Heart right ventricle (tissue), 16 donors: ENCODE measurements at regions of chr6 and their contacts with region 1.

Region 1: DNA sequence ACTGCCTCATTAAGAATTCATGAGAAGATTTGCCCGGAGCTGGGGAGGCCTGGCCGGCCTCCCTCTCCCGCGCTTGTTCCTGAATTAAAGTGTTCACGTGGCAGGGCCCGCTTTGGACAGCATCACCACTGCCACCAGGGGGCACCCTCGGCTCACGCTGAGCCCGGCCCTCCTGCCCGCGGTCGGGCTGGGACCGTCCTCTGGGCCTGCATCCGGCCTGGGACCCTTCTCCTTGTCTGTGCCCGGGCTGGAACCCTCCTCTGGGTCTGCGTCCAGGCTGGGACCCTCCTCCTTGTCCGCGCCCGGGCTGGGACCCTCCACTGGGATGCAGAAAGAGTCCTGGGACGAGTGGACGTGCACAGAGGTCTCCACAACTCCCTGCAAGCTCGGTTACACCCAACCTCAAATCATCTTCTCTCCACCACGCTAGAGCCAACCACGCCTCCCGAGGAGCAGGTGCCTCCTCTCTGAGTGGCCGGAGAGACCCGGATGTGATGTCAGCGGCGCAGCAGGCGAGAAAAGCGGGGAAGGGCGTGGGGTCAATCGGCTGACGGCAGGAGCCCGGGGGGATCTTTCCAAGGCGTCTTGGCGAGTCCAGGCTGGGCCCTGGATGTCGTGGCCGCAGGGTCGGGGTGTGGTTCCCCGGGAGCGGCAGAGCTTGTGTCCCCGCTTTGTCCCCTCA is 50.9 kb upstream of the DACT2 start:
- DNase-seq: peak; percentile 65 to 82
- ATAC-seq: peak; percentile 87 to 93 (median 88)
- H3K4me3 ChIP-seq: no peak overlapping the region
- H3K27ac ChIP-seq: no peak overlapping the region
- H3K4me1 ChIP-seq: peaks cover 0 to 10% (median 0%) of the 10 kb centered on the region in 9 donors
- H3K27me3 ChIP-seq: peaks cover 0 to 37% (median 5%) of the 10 kb centered on the region in 7 donors
- CTCF ChIP-seq: peak; percentile 64 to 89 (median 81)

Region 2: DNA sequence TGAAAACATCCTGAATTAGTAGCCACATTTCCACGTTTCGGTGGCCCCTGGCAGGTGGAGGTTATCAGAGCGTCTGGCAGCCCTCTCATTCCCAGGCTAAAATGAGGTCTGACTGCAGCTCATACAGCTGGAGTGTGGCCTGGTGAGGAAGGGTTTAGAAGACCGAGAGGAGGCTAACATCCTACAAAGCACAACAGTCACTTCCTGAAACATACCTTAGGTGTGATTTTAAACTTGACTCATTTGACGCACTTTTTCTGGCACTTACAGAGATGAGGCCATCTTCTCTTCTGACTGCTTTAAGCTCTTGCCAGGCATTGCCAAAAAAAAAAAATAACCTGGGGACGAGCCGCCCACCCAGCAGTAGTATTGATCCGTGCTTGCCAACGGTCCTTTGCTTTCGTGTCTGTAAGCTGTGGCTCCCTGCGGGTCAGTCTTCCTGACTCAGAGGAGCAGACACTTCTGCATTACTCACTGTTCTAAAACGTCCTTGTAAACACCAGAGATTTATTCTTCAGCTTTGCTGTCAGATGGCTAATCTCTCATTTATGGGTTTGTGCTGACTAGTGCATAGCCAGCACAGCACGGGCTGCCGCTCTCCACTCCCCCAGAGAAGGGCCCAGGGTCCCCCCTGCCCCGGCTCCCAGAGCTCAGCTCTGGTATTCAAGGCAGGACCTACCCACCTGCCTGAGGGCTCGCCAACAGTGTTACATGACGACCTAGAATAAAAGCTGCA is 213.0 kb before region 1 on chr6:
- intact Hi-C with region 1: loop called in 1 of 10 experiments (anchors 10 kb)
- DNase-seq: no peak
- ATAC-seq: peak in 4 of 8 donors; percentile 35 to 56 (median 42)
- H3K4me3 ChIP-seq: no peak overlapping the region
- H3K27ac ChIP-seq: no peak overlapping the region
- H3K4me1 ChIP-seq: no peaks in the 10 kb centered on the region
- H3K27me3 ChIP-seq: peaks cover 0 to 54% (median 29%) of the 10 kb centered on the region in 7 donors
- CTCF ChIP-seq: no peak

Region 3: GRCh38 chr6:168440520-168441433 is 70.3 kb after region 1 on chr6 and contains the start of gene SMOC2:
- intact Hi-C with region 1: loop called in 2 of 10 experiments (anchors 5 to 10 kb)
- DNase-seq: peak; percentile 54 to 58
- ATAC-seq: peak; percentile 61 to 85 (median 75)
- H3K4me3 ChIP-seq: peak within 1 kb of the TSS; percentile 33 to 68 (median 64)
- H3K27ac ChIP-seq: peak within 1 kb of the TSS in 9 of 10 donors; percentile 26 to 76 (median 69)
- H3K4me1 ChIP-seq: peaks cover 0 to 32% (median 8%) of the 10 kb centered on the region in 9 donors
- H3K27me3 ChIP-seq: peaks cover 12 to 79% (median 60%) of the 10 kb centered on the region in 7 donors
- CTCF ChIP-seq: peak in 1 of 9 donors; percentile 6
- total RNA-seq, gene SMOC2: 6.6 to 39.1 (median 18.4) TPM

Region 4: DNA sequence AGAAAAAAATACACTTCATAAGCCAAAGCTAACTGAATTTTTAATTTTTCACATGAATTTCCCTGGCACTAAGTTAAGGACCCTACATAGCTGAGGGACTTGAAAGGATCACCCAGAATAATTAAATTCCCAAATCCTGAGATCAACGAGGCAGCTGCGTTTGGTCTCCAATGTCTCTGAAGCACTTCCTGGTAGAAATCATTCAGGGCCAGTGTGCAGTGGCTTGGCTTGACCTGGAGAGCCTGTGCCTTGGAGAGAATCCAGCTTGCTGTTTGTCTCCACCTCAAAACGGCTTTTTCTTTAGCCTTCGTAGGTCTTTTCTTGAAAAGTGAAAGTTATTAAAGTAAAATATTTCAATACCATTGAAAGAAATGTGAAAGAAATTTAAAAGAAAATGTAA is 163.0 kb after region 1 on chr6:
- intact Hi-C with region 1: loop called in 2 of 10 experiments (anchors 5 to 10 kb)
- DNase-seq: peak in 1 of 2 donors; percentile 47
- ATAC-seq: peak in 7 of 8 donors; percentile 40 to 80 (median 66)
- H3K4me3 ChIP-seq: no peak overlapping the region
- H3K27ac ChIP-seq: peak overlapping the region in 9 of 10 donors; percentile 5 to 69 (median 44)
- H3K4me1 ChIP-seq: peaks cover 0 to 58% (median 11%) of the 10 kb centered on the region in 9 donors
- H3K27me3 ChIP-seq: no peaks in the 10 kb centered on the region
- CTCF ChIP-seq: no peak

Region 5: DNA sequence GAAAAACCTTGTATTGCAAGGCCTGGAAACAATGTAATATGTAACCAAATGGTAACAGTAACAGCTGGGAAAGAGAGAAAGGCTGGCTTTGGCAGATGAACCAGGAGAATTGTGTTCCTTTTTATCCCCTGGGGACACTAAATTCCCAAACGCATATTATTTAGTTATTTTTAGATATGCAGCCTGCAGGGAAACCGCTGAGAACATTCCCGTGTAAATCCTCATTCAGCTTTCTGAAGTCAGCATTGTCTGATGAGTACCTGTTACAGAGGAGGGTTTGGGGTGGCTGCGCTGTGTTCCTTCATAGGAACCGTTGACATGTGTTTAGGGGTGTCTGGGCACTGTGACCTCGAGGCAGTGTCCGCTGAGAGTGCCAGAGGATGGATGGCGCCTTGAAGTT is 171.8 kb after region 1 on chr6:
- intact Hi-C with region 1: loop called in 2 of 10 experiments (anchors 10 kb)
- DNase-seq: no peak
- ATAC-seq: peak in 7 of 8 donors; percentile 28 to 79 (median 38)
- H3K4me3 ChIP-seq: no peak overlapping the region
- H3K27ac ChIP-seq: peak overlapping the region in 7 of 10 donors; percentile 34 to 79 (median 51)
- H3K4me1 ChIP-seq: peaks cover 0 to 45% (median 24%) of the 10 kb centered on the region in 9 donors
- H3K27me3 ChIP-seq: peaks cover 0 to 5% (median 0%) of the 10 kb centered on the region in 7 donors
- CTCF ChIP-seq: no peak

Region 6: DNA sequence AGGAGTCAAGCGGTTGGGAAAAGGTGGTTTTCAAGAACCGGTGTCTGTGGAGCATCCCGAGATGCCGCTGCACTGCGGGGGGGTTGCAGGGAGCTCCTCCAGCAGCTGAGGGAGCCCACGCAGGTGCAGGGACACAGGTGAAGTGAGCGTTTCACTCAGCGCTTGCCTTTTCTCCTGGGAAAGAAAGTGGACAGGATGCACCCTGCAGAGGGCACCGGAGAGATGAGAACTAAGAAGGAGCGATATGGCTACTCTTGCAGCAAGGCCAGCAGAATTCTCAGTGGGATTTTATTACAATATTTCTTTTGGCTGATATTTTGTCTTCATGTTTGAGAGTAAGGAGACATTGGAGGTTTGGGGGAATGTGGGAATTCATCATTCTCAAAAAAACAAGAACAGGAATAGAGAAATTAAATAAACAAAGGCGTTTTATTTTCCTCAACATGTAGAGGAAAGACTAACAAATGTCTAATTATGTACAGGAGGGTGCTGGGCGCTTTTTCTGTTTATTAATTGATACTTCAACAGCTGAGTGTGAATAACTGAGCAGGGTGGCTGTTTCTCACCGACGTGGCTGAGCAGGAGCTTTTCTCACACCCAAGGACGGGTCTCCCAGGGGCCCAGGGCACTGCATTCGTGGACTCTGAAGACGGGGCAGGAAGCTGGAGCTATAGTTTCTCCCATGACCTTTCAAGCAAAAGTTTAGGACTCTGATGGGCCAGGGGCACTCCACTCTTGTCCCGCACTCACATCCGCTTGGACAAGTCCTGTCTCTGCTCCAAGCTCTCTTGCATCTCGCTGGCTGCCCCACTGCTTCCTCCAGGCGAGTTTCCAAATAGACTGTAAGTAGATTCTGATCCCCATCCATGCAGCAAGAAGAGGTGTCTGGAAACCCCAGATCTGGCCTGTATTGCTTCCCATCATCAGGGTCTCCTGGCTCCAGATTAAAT is 246.6 kb after region 1 on chr6:
- intact Hi-C with region 1: loop called in 1 of 10 experiments (anchors 5 kb)
- DNase-seq: peak in 1 of 2 donors; percentile 39
- ATAC-seq: peak; percentile 53 to 91 (median 74)
- H3K4me3 ChIP-seq: no peak overlapping the region
- H3K27ac ChIP-seq: peak overlapping the region in 6 of 10 donors; percentile 15 to 50 (median 40)
- H3K4me1 ChIP-seq: peaks cover 0 to 17% (median 0%) of the 10 kb centered on the region in 9 donors
- H3K27me3 ChIP-seq: no peaks in the 10 kb centered on the region
- CTCF ChIP-seq: peak in 8 of 9 donors; percentile 11 to 57 (median 38)

Region 7: DNA sequence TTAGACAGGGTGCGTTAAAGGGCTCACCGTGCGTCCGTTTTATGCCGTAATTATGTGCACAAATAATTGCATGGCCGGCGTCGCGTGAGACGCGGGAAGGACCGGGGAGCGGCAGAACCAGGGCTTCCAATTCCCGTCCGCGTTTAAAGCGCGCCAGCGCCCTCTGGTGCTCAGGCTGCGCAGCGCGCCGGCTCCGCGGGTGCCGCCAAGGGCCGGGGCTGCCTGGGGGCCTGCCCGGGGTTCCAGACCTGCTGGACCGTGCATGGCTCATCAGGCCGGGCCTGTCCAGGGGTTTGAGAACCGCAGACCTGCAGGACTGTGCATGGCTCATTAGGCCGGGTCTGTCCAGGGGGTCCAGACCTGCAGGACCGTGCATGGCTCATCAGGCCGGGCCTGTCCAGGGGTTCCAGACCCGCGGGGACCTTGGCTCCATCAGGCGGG is 514.2 kb after region 1 on chr6:
- intact Hi-C with region 1: loop called (anchors 1 to 2 kb)
- DNase-seq: peak; percentile 54 to 80
- ATAC-seq: peak; percentile 82 to 88 (median 86)
- H3K4me3 ChIP-seq: peak overlapping the region in 8 of 10 donors; percentile 4 to 49 (median 42)
- H3K27ac ChIP-seq: peak overlapping the region in 1 of 10 donors; percentile 41
- H3K4me1 ChIP-seq: peaks cover 0 to 5% (median 0%) of the 10 kb centered on the region in 9 donors
- H3K27me3 ChIP-seq: peaks cover 0 to 26% (median 8%) of the 10 kb centered on the region in 7 donors
- CTCF ChIP-seq: peak; percentile 89 to 97 (median 95)